Activated CD4-positive, alpha-beta T cell treated with anti-CD3 and anti-CD28 coated beads for 36 hours (primary cell): ENCODE measurements at regions of chrX and their contacts with region 1.

Region 1: GRCh38 chrX:23907498-23908218 is at the starts of genes APOO and CXorf58:
- DNase-seq: peak; percentile 95
- ATAC-seq: peak; percentile 94
- H3K4me3 Mint-ChIP-seq: peak within 1 kb of the TSS; percentile 75
- H3K27ac Mint-ChIP-seq: peak within 1 kb of the TSS; percentile 83
- H3K4me1 Mint-ChIP-seq: peaks cover 18% of the 10 kb centered on the region
- H3K27me3 Mint-ChIP-seq: no peaks in the 10 kb centered on the region
- total RNA-seq, gene APOO: 30.2 to 37.2 TPM
- total RNA-seq, gene CXorf58: 0.14 TPM in 1 of 2 experiments, not detected in the other

Region 2: GRCh38 chrX:22192417-22193060 is 1715.1 kb before region 1 on chrX:
- CTCF ChIA-PET with region 1: no interaction called
- POLR2A ChIA-PET with region 1: no interaction called
- intact Hi-C with region 1: loop called in 1 of 2 experiments (anchors 10 kb)
- DNase-seq: peak; percentile 73
- ATAC-seq: peak; percentile 36
- H3K4me3 Mint-ChIP-seq: no peak overlapping the region
- H3K27ac Mint-ChIP-seq: no peak overlapping the region
- H3K4me1 Mint-ChIP-seq: peaks cover 8% of the 10 kb centered on the region
- H3K27me3 Mint-ChIP-seq: no peaks in the 10 kb centered on the region

Region 3: DNA sequence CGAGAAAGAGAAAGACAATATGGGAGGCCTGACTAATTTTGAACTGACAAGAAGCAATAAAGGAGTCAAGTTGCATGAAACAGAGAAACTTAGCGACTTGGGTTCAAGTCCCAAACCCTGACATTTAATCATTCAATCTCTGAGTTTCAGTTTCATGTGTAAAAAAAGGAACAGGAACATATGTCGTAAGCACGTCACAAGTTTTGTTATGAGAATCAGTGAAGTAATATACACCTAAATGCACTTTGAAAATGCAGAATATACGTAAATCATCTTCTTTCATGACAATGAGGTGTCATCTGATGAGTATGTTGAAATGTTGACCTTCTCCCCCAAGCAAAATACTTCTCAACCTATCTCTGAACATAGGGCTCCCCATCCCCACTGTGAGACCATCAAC is 175.0 kb before region 1 on chrX:
- CTCF ChIA-PET with region 1: interaction called, 3 read pairs
- POLR2A ChIA-PET with region 1: no interaction called
- intact Hi-C with region 1: loop called in 1 of 2 experiments (anchors 2 kb)
- DNase-seq: no peak
- ATAC-seq: peak; percentile 83
- H3K4me3 Mint-ChIP-seq: peak overlapping the region; percentile 39
- H3K27ac Mint-ChIP-seq: peak overlapping the region; percentile 89
- H3K4me1 Mint-ChIP-seq: peaks cover 36% of the 10 kb centered on the region
- H3K27me3 Mint-ChIP-seq: no peaks in the 10 kb centered on the region

Region 4: DNA sequence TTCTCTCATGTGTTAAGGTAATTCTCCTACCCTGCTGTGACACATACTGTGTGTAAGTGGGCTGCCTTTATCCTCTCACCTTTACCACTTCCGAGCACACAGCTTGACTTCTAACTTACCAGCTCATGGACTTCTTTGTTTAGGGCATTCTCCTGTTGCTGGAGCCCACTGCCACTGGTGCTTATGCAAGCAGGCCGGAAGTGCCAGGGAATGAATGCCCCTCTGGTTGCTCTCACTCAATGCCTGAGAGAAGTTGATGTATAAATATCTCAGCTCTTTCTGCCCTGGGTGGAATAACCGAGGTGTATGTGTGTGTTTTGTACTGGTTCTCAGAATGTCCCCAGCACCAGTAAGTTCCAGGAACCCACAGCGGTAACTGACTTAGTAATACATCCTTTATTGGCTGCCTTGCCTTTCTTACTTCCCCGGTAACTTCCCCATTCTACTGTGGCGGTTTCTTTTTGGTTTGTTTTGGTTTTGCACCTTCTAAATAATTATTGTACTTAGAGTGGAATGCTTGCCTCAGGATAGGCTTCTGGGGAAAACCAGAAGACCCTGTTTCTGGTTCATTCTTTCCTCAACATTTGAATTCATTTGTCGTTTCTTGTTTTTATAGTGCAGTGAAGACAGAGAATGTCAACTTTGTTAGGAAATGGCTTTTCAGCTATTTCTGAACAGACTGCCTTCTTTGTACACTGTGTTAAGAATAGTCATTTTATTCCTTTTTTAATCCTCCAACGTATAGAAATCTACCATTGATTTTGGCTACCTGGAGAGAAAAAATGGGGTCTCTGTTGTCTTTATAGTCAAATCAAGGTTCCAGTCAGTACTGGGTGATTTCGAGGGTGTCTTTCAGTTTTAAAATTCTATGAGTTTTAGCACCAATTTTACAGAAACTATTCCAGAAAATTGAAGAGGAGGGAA is 45.6 kb after region 1 on chrX:
- CTCF ChIA-PET with region 1: interaction called, 3 read pairs
- POLR2A ChIA-PET with region 1: no interaction called
- intact Hi-C with region 1: loop called (anchors 1 to 2 kb)
- DNase-seq: peak; percentile 54
- ATAC-seq: peak; percentile 92
- H3K4me3 Mint-ChIP-seq: peak overlapping the region; percentile 69
- H3K27ac Mint-ChIP-seq: peak overlapping the region; percentile 93
- H3K4me1 Mint-ChIP-seq: peaks cover 17% of the 10 kb centered on the region
- H3K27me3 Mint-ChIP-seq: no peaks in the 10 kb centered on the region

Region 5: GRCh38 chrX:24054182-24055042 is 146.8 kb after region 1 on chrX and contains the start of gene EIF2S3:
- CTCF ChIA-PET with region 1: interaction called, 24 read pairs
- POLR2A ChIA-PET with region 1: interaction called, 9 read pairs
- intact Hi-C with region 1: loop called (anchors 1 kb)
- DNase-seq: peak; percentile 89
- ATAC-seq: peak; percentile 89
- H3K4me3 Mint-ChIP-seq: no peak within 1 kb of the TSS
- H3K27ac Mint-ChIP-seq: no peak within 1 kb of the TSS
- H3K4me1 Mint-ChIP-seq: peaks cover 7% of the 10 kb centered on the region
- H3K27me3 Mint-ChIP-seq: no peaks in the 10 kb centered on the region
- total RNA-seq, gene EIF2S3: 316 to 336 TPM

Region 6: DNA sequence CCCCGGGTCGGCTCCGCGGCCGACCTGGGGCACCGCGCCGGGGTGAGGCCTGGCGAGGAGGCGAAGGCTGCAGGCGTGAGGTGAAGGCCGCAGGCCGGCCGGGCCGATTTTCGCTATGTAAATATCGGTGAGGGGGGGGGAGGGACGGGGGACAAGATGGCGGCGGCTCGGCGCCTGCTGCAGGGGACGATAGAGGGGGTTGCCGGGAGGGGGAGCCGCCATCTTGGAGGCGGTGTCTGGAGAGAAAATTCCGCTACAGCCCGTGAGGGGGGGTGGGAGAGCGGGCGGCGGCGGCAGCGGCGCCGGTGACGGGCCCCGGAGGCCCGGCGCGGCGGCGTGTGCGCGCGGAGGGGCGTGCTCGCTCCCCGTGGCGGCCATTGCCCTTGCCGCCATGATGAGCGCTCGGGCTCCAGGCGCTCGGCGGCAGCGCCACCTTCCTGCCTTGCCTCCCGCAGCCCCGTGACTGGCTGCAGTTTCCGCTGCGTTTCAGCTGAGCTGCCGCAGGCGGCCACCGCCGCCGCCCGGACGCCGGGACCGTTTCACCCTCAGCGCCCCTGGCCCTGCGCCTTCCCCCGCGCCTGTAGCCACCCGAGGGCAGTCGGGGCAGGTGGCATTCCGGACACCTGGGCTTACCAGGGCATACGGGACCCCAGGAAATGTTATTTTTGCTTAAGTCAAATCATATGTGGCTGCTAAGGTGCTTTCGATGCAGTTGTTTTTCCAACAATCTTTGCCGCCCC is 242.6 kb after region 1 on chrX:
- CTCF ChIA-PET with region 1: no interaction called
- POLR2A ChIA-PET with region 1: no interaction called
- intact Hi-C with region 1: loop called (anchors 1 to 5 kb)
- DNase-seq: peak; percentile 92
- ATAC-seq: peak; percentile 81
- H3K4me3 Mint-ChIP-seq: peak overlapping the region; percentile 93
- H3K27ac Mint-ChIP-seq: peak overlapping the region; percentile 97
- H3K4me1 Mint-ChIP-seq: peaks cover 50% of the 10 kb centered on the region
- H3K27me3 Mint-ChIP-seq: no peaks in the 10 kb centered on the region